Activated naive CD4-positive, alpha-beta T cell treated with anti-CD3 and anti-CD28 coated beads for 36 hours (primary cell): ENCODE measurements at regions of chr17 and their contacts with region 1.

Region 1: DNA sequence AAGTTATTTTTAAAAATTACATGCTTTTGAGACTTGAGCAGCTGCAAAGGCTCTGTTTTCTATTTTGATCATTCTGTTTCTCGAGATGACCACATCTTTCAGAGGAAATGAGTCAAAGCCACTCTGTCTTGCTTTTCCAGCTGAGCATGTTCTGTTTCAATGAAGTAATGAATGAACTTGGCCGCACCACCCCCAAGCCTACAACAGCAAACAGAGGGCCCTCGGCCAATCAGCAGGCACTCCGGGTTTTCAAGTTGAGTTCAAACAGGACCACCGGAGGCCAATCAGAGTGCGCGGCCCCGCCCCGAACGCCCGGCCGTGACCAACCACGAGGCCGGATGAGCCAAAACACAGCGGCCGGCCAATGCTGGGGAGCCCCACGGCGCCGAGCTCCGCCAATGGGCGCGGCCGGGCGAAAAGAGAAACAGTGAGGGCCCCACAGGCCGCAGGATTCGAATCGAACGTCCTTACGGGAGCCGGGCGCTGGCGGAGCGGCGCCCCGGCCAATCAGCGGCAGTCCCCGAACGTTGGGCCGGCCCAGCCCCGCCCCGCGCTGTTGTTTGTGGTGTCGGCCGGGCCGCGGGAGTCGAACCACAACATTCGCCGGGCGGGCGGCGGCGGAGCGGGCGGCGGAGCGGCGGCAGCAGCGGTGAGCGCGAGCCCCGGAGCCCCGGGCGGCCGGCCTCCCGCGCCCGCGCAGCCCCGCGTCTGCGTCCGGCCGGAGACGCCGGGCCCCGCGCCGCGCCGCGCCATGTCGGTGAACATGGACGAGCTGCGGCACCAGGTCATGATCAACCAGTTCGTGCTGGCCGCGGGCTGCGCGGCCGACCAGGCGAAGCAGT is at the start of gene UBALD2:
- DNase-seq: peak; percentile 99
- H3K4me3 Mint-ChIP-seq: peak within 1 kb of the TSS; percentile 88
- H3K27ac Mint-ChIP-seq: peak within 1 kb of the TSS; percentile 100
- H3K4me1 Mint-ChIP-seq: peaks cover 48% of the 10 kb centered on the region
- H3K27me3 Mint-ChIP-seq: no peaks in the 10 kb centered on the region
- total RNA-seq, gene UBALD2: 467 to 472 TPM

Region 2: DNA sequence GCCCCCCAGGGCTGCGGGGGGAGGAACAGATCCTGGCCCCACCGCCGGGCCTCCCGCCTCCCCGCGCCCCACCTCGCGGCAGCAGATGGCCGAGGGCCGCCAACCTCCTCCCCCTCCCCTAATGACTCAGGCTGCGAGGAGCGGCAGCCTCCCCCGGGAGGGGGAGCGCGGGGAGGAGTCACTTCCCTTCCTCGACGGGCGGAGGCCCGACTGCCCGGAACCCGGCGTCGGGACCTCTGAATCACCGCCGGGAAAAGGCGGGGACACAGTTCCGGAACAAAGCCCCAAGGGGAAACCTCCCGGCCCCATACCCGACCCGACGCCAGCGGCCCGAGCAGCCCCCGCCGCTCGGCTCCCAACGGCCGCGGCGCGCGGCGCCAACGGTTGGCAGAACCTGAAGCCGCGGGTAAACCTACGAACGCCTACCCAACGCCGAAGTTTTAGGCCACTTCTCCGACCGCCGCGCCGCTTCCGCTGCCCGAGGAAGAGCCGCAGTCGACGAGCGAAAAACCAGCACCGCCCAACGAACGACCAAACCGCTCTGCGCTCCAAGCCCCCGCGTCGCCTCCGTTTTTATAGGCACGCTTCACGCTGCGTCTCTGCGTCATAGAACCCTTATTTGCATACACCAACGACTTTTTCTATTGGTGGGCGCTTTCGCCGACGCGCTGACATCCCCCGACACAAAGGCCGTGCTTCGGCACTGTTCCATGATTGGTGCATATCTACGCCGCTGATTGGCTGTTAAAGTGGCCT is 485.6 kb before region 1 on chr17:
- CTCF ChIA-PET with region 1: no interaction called
- intact Hi-C with region 1: loop called (anchors 5 kb)
- DNase-seq: peak; percentile 97
- H3K4me3 Mint-ChIP-seq: peak overlapping the region; percentile 91
- H3K27ac Mint-ChIP-seq: peak overlapping the region; percentile 99
- H3K4me1 Mint-ChIP-seq: peaks cover 54% of the 10 kb centered on the region
- H3K27me3 Mint-ChIP-seq: peaks cover 3% of the 10 kb centered on the region

Region 3: GRCh38 chr17:76182016-76182764 is 82.8 kb before region 1 on chr17:
- CTCF ChIA-PET with region 1: interaction called, 15 read pairs
- intact Hi-C with region 1: no loop called
- DNase-seq: peak; percentile 99
- H3K4me3 Mint-ChIP-seq: peak overlapping the region; percentile 63
- H3K27ac Mint-ChIP-seq: peak overlapping the region; percentile 94
- H3K4me1 Mint-ChIP-seq: peaks cover 74% of the 10 kb centered on the region
- H3K27me3 Mint-ChIP-seq: no peaks in the 10 kb centered on the region

Region 4: DNA sequence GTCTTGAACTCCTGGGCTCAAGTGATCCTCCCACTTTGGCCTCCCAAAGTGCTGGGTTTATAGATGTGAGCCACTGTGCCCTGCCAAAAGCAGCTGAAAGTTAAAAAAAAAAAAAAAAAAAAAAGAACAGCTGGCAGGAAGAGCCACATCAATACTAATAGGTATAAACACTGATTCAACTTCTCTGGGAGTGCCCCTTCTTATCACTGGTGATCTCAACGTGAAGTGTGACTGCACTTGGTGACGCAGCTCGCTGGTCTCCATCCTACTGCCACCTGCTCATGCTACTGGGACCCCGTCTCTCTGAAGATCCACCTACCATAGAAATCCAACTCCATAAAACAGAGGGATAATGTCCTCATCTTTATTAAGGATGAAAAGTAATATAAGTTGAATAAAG is 65.5 kb before region 1 on chr17:
- CTCF ChIA-PET with region 1: interaction called, 4 read pairs
- intact Hi-C with region 1: loop called (anchors 1 kb)
- DNase-seq: peak; percentile 87
- H3K4me3 Mint-ChIP-seq: no peak overlapping the region
- H3K27ac Mint-ChIP-seq: peak overlapping the region; percentile 91
- H3K4me1 Mint-ChIP-seq: peaks cover 74% of the 10 kb centered on the region
- H3K27me3 Mint-ChIP-seq: no peaks in the 10 kb centered on the region

Region 5: DNA sequence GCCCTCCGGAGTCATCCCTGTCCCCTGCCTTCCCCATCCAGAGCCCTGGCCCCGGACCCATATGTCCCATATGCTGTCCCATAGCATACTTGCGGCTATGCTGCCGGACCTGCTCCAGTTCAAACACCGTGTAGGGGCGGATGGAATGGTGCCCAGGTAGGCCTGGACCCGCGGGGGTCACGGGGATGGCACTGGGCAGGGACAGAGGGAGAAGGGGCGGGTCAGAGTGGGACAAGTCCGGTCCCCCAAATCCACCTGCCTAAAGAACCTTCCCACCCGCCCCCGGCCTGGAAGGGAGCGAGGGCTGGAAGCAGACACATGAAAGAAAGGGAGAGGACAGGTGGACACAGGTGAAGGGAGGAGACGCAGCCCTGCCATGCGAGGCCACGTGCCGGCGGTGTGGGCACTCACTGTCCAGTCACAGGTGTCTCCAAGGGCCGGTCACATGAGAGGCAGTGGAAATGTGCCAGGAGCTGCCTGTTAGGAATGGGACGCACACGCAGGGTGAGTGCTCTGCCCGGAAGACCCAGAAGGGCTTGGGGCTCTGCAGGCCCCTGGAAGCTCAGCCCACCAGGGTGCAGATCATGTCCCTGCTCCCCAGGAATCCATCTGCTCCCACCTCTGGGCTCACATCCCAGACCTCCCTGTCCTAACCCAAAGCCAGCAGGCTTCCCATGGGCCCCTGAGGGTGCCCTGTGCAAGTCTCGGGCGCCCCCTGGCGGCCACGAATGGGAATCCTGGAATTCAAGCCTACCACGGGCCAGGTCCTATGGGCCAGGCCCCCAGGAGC is 14.2 kb after region 1 on chr17:
- CTCF ChIA-PET with region 1: interaction called, 18 read pairs
- intact Hi-C with region 1: no loop called
- DNase-seq: peak; percentile 91
- H3K4me3 Mint-ChIP-seq: no peak overlapping the region
- H3K27ac Mint-ChIP-seq: no peak overlapping the region
- H3K4me1 Mint-ChIP-seq: peaks cover 28% of the 10 kb centered on the region
- H3K27me3 Mint-ChIP-seq: no peaks in the 10 kb centered on the region

Region 6: GRCh38 chr17:76327696-76328095 is 62.7 kb after region 1 on chr17:
- CTCF ChIA-PET with region 1: no interaction called
- intact Hi-C with region 1: no loop called
- DNase-seq: no peak
- H3K4me3 Mint-ChIP-seq: no peak overlapping the region
- H3K27ac Mint-ChIP-seq: no peak overlapping the region
- H3K4me1 Mint-ChIP-seq: no peaks in the 10 kb centered on the region
- H3K27me3 Mint-ChIP-seq: no peaks in the 10 kb centered on the region